ENCODE measurements at regions of chr2 and their contacts with region 1.

Region 1: DNA sequence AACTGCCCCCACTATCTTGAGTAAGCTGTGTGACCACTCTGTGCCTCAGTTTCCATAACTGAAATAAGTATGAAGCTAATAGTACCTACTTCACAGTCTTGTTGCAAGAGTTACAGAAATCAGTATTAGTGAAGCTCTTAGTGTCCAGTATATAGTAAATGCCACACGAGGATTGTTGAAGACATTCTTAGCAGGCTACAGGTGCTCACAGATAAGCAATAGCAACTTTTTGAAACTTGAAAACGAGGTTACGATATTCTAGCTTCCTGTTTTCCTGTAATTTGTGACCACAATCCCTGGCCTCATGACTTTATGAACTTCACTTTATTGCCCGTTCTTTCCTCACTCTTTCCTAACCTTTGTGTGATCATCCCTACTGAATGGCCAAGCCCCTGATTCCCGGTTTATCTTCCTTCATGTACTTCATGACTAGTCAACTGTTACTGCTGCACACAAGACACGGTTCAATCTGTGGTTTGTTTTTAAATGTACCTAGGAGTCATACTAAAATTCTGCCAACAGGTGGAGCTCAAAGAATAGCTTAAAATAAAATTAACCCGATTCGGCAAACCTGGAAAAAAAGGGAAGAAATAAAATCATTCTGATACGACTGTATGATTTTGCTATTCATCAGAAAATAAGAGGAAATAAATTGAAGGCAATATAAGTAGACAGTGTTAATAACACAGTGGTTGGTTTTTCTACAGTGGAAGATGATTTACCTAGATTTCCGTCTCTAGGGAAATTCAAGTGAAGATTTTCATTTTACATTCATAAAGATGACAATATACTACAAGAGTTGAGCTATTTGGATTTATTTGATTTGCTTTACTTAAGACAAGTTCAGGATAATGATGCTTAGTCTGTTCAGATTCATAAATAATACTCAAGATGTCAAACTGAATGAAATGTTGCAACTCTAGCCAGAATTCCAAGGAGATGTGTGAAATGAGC is 38.1 kb upstream of the STAT1 start:
- DNase-seq: peak; percentile 74
- ATAC-seq: peak; percentile 16; the same call in 1 of the 2 replicates
- H3K4me3 ChIP-seq: no peak overlapping the region
- H3K27ac ChIP-seq: peak overlapping the region; percentile 92; the same call in 1 of the 2 replicates
- H3K4me1 ChIP-seq: peaks cover 19% of the 10 kb centered on the region
- H3K27me3 ChIP-seq: no peaks in the 10 kb centered on the region
- CTCF ChIP-seq: peak; percentile 76
- POLR2A ChIP-seq: no peak
- RAD21 ChIP-seq: peak; percentile 77

Region 2: DNA sequence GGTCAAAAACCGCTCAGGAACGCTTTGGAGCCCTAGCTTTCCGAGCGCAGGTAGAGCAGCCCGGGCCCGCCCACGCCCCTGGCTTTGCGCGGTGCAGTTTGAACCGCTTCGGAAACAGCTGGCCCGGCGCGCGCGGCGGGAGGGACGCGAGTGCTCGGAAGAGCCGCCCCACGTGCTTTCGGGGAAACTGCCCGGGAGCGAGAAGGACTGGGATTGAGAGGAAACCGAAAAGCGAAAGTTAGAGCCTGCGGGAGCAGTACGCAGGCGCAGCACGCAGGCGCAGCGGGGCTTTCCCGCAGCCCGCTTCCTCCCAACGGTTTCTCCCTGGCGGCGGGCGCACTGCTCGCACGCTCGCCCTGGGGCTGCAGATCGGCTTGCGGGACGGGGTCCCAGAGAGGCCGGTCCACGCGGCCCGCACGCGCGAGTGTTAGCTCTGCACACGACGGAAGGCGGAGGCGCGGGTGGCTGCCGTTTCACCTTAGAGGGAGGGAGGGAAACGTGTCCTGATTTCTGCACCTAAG is 31.8 kb before region 1 on chr2:
- CTCF ChIA-PET with region 1: no interaction called
- POLR2A ChIA-PET with region 1: interaction called, 4 read pairs
- dilution Hi-C with region 1: no loop called
- in situ Hi-C with region 1: no loop called
- intact Hi-C with region 1: loop called (anchors 2 kb)
- DNase-seq: peak; percentile 97
- ATAC-seq: peak; percentile 92
- H3K4me3 ChIP-seq: peak overlapping the region; percentile 61
- H3K27ac ChIP-seq: peak overlapping the region; percentile 98
- H3K4me1 ChIP-seq: peaks cover 14% of the 10 kb centered on the region
- H3K27me3 ChIP-seq: no peaks in the 10 kb centered on the region
- CTCF ChIP-seq: no peak
- POLR2A ChIP-seq: peak; percentile 85
- RAD21 ChIP-seq: peak; percentile 22; the same call in 1 of the 2 replicates

Region 3: DNA sequence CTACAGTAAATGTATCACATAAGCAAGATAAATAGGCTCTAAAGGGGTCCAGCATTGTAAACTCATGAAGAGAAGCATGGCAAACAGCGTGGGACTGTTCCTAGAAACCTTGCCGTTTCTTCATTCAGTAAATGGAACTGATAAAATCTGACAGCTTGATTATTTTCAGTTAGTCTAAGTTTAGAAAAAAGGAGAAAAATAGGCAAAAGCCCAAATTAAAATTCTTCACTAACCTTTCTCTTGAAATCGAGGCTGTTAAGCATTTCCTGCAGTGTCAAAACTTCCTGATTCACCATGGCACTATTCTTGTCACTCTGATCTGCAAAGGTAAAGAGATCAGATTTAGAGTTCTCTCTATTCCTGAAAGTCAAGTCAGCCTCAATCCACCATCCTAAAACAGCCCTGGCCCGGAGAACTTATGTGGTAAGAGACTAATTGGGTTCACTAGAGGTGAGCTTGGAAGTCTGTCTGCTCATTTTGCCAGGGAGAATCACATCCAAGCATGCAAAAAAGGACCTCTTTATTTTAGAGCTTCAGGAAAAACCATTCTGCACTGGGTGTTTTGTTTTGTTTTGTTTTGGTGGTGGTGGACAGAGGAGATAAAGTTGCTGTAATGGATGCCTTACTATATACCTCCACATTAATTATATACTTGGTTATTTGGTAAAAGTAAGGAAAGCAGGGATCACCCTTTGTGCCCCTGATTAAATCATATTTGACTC is 14.3 kb after region 1 on chr2:
- CTCF ChIA-PET with region 1: interaction called, 11 read pairs
- POLR2A ChIA-PET with region 1: no interaction called
- dilution Hi-C with region 1: no loop called
- in situ Hi-C with region 1: no loop called
- intact Hi-C with region 1: no loop called
- DNase-seq: no peak
- ATAC-seq: no peak
- H3K4me3 ChIP-seq: no peak overlapping the region
- H3K27ac ChIP-seq: no peak overlapping the region
- H3K4me1 ChIP-seq: 0 out of 2 replicates have a peak, but pooled peaks cover 2% of the 10 kb centered on the region
- H3K27me3 ChIP-seq: no peaks in the 10 kb centered on the region
- CTCF ChIP-seq: no peak
- POLR2A ChIP-seq: no peak
- RAD21 ChIP-seq: no peak

Region 4: GRCh38 chr2:191501561-191502168 is 449.6 kb after region 1 on chr2:
- CTCF ChIA-PET with region 1: interaction called, 6 read pairs
- POLR2A ChIA-PET with region 1: no interaction called
- dilution Hi-C with region 1: no loop called
- in situ Hi-C with region 1: loop called (anchors 10 kb)
- intact Hi-C with region 1: loop called (anchors 2 kb)
- DNase-seq: peak; percentile 70
- ATAC-seq: peak; percentile 69
- H3K4me3 ChIP-seq: no peak overlapping the region
- H3K27ac ChIP-seq: no peak overlapping the region
- H3K4me1 ChIP-seq: peaks cover 4% of the 10 kb centered on the region; the same call in 1 of the 2 replicates
- H3K27me3 ChIP-seq: no peaks in the 10 kb centered on the region
- CTCF ChIP-seq: peak; percentile 90
- POLR2A ChIP-seq: no peak
- RAD21 ChIP-seq: peak; percentile 94

Measured in IMR-90 (cell line).